A673 (cell line): ENCODE measurements at regions of chr11 and their contacts with region 1.

Region 1: GRCh38 chr11:108871152-108871551 is 206.3 kb downstream of the DDX10 start:
- DNase-seq: peak; percentile 76
- H3K4me3 ChIP-seq: no peak overlapping the region
- H3K27ac ChIP-seq: no peak overlapping the region
- H3K4me1 ChIP-seq: peaks cover 36% of the 10 kb centered on the region
- H3K27me3 ChIP-seq: no peaks in the 10 kb centered on the region
- CTCF ChIP-seq: peak; percentile 79

Region 2: DNA sequence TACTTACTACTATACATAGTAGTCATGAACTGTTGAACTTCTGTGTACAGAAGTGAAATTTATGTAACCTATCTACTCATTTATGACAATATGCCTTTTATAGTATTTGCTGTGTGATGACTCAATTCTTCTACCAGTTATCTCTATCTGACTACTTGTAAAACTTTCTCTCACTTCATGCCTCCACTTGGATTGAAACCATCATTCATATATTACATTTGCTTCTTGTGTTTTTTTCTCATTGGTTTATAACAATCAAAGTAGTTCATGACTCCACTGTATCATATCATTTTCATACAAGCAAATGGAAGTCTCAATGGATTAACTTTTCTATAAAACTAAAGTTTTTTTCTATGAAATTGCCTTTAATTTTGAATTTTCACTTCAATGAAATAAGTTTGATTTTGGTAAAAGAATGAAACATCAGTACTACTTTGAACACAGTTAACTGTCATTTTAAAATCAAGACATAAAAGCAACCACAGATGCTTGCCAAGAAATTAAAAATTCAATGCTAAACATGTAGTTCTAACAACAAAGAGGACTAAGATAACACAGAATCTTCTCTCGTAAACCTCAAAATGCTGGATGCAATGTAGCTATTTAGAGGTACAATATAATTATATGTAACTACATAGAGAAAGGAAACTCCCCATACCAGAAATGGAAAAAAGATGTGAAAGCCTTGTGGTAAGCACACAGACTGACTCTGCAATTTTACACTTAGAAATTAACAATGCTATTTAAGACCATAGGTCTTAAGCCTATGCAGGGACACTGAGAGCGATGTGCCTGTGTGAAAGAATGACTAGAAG is 250.0 kb before region 1 on chr11:
- CTCF ChIA-PET with region 1: no interaction called
- POLR2A ChIA-PET with region 1: no interaction called
- intact Hi-C with region 1: no loop called
- DNase-seq: no peak
- H3K4me3 ChIP-seq: no peak overlapping the region
- H3K27ac ChIP-seq: no peak overlapping the region
- H3K4me1 ChIP-seq: no peaks in the 10 kb centered on the region
- H3K27me3 ChIP-seq: no peaks in the 10 kb centered on the region
- CTCF ChIP-seq: no peak

Region 3: DNA sequence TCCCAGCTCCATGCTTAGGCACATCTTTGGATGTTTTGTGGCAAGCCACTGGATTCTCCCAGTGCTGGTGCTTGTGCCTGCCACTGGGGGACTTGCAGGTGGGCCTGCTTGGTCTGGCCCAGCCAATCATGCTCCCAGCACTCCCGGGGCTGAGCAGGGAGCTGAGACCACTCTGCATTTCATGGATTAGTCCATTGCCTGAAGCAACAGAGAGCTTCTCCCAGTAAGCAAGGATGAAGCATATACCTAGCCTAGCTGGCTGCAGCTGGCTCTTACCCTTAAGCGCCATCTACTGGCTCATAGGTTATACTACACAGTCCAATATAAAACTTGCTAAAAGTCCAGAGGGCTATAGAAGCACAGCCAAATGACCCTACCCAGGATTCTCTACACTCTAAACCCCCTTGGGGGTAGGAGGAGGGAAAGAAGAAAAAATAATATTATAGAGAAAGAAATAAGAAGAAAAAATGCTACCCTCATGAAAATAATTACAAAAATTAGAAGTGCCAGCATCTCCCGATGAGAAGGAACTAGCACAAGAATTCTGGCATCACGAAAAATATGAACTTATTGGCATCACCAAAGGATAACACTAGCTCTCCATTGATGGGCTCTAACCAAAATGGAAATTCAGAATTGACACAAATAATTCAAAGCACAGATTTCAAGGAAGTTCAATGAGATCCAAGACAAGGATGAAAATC is 826.1 kb after region 1 on chr11:
- CTCF ChIA-PET with region 1: no interaction called
- POLR2A ChIA-PET with region 1: no interaction called
- intact Hi-C with region 1: loop called (anchors 10 kb)
- DNase-seq: peak; percentile 75
- H3K4me3 ChIP-seq: no peak overlapping the region
- H3K27ac ChIP-seq: no peak overlapping the region
- H3K4me1 ChIP-seq: no peaks in the 10 kb centered on the region
- H3K27me3 ChIP-seq: no peaks in the 10 kb centered on the region
- CTCF ChIP-seq: peak; percentile 91